ENCODE measurements at regions of chr12 and their contacts with region 1.

Region 1: DNA sequence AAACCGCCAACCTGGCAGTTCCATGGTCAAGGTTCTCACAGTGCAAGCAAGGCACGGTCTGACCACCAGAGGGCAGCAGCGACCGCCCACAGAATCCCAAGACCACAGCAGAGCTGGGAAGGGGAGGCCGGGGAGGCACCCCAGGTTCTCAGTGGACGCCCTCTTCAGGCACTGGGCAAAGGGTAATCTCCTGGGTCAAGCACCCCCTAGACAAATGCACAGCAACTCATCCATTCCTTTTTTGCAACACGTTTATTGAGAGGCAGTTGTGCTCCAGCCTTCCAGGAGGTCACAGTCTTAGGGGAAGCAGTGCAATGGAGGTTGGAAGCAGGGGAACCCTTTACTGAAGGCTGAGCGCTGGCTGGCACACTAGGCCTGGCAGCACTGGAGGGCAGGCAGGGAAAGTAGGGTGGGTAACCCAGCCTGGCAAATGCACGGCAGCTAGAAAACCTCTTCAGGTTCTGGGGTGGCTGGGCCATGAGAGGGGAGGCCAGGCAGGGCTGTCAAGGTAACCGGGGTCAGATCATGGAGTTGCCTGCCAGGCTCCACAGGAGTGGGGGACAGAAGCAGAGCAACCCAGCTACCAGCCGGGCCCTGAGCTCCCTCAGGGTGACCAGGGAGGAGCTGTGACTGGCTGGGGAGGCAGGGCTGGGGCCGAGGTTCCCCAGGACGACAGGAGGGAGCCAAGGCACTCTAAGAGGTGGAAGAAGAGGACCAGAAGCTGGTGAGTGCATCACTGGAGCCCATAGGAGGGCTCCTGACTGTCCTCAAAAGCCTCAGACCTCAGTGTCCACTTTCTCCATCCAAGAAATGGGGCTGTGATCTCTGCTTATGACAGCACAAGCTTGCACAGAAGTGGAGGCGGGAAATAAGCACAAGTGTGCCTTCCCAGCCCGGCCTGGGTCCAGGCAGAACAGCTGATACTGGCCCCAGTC is 1.8 kb upstream of the RHOF start:
- DNase-seq: peak; percentile 63 to 92
- H3K4me3 ChIP-seq: no peak overlapping the region; the same call in none of the 2 replicates
- H3K4me1 ChIP-seq: peaks cover 48% of the 10 kb centered on the region
- H3K27me3 ChIP-seq: no peaks in the 10 kb centered on the region

Region 2: DNA sequence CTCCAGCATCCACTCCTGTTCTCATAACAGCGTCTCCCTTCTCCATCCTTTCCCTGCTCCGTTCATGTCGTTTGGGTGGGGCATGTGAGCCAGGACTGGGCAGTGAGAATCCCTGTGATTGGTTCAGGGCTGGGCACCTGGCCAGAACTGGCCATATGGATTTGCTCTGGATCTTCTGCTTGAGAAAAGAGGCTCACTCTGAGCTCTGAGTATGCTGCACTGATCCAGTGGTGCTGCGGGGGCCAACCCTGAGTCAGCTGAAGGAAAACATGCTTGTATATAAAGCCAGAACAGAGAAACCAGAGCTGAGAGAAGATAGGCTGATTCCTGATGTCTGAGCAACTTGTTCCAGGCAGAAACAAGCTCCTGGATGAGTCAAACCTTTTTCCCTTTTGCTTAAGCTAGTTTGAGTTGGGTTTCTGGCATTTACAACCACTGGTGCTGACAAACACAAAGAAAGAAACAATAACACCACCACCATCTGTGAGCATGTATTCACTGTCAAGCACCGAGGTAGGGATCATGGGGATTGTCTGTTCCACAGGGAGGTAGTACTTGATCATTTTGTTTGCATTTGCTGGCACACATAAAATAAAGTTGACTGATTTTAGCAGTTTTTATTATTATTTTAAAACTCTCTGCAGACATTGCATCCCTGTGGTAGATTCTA is 77.4 kb after region 1 on chr12:
- in situ Hi-C with region 1: no loop called
- DNase-seq: no peak
- H3K4me3 ChIP-seq: no peak overlapping the region
- H3K4me1 ChIP-seq: no peaks in the 10 kb centered on the region
- H3K27me3 ChIP-seq: no peaks in the 10 kb centered on the region

Region 3: DNA sequence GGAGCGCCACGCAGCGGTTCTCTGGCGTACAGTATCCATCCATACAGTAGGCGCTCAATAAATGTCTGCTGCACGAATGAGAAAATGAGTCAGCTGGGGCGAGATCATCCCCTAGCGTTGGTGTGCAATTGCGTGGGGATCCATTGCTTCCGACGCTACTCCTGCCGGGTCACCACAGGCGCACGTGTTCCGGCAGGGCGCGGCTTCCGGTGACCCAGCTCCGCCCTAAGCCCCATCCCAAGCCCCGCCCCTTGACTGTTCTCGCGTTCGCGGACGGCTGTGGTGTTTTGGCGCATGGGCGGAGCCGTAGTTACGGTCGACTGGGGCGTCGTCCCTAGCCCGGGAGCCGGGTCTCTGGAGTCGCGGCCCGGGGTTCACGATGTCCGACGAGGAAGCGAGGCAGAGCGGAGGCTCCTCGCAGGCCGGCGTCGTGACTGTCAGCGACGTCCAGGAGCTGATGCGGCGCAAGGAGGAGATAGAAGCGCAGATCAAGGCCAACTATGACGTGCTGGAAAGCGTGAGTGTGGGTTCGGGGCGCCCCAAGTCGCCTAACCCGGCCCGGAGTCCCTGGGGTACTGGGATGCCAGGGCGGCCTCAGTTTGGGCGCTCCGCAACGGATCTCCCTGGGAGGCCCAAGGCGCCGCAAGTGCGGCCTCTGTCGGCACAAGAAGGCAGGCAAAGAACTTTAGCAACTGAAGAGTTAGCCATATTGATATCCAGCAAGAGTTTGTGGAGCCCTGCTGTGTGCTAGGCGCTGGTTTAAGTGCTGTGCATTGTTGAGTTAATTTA is 93.4 kb after region 1 on chr12 and contains the start of gene PSMD9:
- in situ Hi-C with region 1: loop called (anchors 5 kb)
- DNase-seq: peak; percentile 91 to 99
- H3K4me3 ChIP-seq: peak within 1 kb of the TSS; percentile 70
- H3K4me1 ChIP-seq: peaks cover 6% of the 10 kb centered on the region
- H3K27me3 ChIP-seq: no peaks in the 10 kb centered on the region